Psoas muscle (tissue), 8 donors: ENCODE measurements at regions of chr3 and their contacts with region 1.

Region 1: DNA sequence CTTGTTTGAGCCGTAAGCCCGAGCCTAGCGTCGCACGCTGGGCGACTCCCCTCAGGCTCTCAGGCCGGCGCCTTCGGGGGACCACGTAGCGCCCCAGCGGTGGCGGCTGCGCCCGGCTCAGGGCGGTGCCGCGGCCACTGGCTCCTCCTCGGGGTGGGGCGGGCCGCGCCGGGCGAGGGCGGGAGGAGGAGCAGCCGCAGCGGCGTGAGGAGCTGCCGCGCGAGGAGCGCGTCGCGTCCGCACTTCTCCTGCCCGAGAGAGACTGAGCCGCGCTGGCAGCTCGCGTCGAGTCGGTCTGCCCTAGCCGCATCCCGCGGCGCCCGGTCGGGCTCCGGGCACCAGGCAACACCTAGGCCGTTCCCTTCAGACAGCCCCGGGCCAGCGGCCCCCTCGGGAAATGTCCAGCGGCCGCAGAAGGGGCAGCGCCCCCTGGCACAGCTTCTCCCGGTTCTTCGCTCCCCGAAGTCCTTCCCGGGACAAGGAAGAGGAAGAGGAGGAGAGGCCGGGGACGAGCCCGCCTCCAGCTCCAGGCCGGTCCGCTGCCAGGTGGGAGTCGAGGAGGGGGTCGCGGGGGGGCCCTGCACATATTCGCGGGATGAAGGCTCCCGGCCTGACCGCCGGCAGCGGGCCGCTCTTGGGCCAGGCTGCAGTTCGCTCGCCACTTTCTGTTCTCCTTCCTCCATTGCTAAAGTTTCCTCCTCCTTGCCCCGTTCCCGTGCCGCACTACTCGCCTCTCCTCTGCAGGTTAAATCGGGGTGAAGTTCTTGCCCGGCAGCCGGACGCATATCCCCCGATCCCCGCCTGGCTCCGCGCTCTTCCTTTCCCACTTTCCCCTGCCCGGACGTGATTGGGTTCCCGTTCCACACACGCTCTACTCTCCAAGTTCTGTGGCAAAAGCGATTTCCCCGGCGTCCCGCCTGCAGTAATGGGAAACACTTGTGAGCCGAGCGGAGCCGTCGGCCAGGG is at the start of gene CRYBG3:
- DNase-seq: peak; percentile 85 to 92
- ATAC-seq: peak; percentile 94 to 98 (median 94)
- H3K4me3 ChIP-seq: peak within 1 kb of the TSS; percentile 88
- H3K27ac ChIP-seq: peak within 1 kb of the TSS; percentile 93
- H3K4me1 ChIP-seq: peaks cover 30% of the 10 kb centered on the region
- H3K27me3 ChIP-seq: no peaks in the 10 kb centered on the region
- CTCF ChIP-seq: peak; percentile 21
- total RNA-seq, gene CRYBG3: 10.1 to 36.9 (median 21.8) TPM

Region 2: GRCh38 chr3:97863031-97863430 is 40.9 kb after region 1 on chr3:
- intact Hi-C with region 1: loop called in 1 of 2 experiments (anchors 5 kb)
- DNase-seq: no peak
- ATAC-seq: peak; percentile 53 to 77 (median 71)
- H3K4me3 ChIP-seq: no peak overlapping the region
- H3K27ac ChIP-seq: no peak overlapping the region
- H3K4me1 ChIP-seq: peaks cover 10% of the 10 kb centered on the region
- H3K27me3 ChIP-seq: no peaks in the 10 kb centered on the region
- CTCF ChIP-seq: no peak

Region 3: GRCh38 chr3:97979610-97980009 is 157.5 kb after region 1 on chr3:
- intact Hi-C with region 1: loop called in 1 of 2 experiments (anchors 5 kb)
- DNase-seq: no peak
- ATAC-seq: peak in 2 of 4 donors; percentile 54 to 57
- H3K4me3 ChIP-seq: no peak overlapping the region
- H3K27ac ChIP-seq: peak overlapping the region; percentile 12
- H3K4me1 ChIP-seq: peaks cover 25% of the 10 kb centered on the region
- H3K27me3 ChIP-seq: no peaks in the 10 kb centered on the region
- CTCF ChIP-seq: no peak